Activated B cell treated with CpG ODN at 0.5 μM for 24 hours (primary cell): ENCODE measurements at regions of chr3 and their contacts with region 1.

Region 1: GRCh38 chr3:66500576-66501482 is at the start of gene LRIG1:
- DNase-seq: peak; percentile 91
- ATAC-seq: peak; percentile 96
- H3K4me3 Mint-ChIP-seq: peak within 1 kb of the TSS; percentile 83
- H3K27ac Mint-ChIP-seq: peak within 1 kb of the TSS; percentile 50
- H3K4me1 Mint-ChIP-seq: peaks cover 23% of the 10 kb centered on the region
- H3K27me3 Mint-ChIP-seq: peaks cover 37% of the 10 kb centered on the region
- CTCF ChIP-seq: no peak
- total RNA-seq, gene LRIG1: 9.4 and 9.7 TPM in 2 replicates

Region 2: DNA sequence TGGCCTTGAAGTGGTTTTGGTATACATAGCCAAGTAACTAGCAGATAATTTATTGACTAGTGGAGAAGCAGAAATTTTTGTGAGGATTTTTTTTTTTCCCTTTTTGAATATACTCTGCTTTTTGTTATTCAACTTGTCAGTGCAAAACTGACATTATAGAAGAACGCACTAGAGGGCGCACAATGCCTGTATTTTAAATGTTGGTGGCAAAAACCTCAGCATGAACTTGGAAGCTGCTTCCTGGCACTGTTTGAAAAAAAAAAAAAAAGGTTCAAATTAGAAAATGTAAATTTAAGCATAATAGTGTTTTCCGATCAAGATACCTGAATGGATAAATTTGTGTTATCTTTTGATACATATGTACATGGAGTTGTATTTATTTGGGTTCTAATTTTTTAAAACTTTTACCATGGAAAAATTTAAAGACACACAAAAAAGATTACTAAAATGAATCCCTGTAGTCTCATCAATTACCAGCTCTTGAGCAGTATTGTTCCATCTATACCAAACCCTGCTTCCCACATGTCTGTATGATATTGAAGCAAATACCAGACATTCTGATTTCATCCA is 224.0 kb before region 1 on chr3:
- CTCF ChIA-PET with region 1: no interaction called
- POLR2A ChIA-PET with region 1: no interaction called
- intact Hi-C with region 1: loop called (anchors 1 kb)
- DNase-seq: no peak
- ATAC-seq: peak; percentile 34
- H3K4me3 Mint-ChIP-seq: no peak overlapping the region
- H3K27ac Mint-ChIP-seq: no peak overlapping the region
- H3K4me1 Mint-ChIP-seq: no peaks in the 10 kb centered on the region
- H3K27me3 Mint-ChIP-seq: no peaks in the 10 kb centered on the region
- CTCF ChIP-seq: peak; percentile 76

Region 3: DNA sequence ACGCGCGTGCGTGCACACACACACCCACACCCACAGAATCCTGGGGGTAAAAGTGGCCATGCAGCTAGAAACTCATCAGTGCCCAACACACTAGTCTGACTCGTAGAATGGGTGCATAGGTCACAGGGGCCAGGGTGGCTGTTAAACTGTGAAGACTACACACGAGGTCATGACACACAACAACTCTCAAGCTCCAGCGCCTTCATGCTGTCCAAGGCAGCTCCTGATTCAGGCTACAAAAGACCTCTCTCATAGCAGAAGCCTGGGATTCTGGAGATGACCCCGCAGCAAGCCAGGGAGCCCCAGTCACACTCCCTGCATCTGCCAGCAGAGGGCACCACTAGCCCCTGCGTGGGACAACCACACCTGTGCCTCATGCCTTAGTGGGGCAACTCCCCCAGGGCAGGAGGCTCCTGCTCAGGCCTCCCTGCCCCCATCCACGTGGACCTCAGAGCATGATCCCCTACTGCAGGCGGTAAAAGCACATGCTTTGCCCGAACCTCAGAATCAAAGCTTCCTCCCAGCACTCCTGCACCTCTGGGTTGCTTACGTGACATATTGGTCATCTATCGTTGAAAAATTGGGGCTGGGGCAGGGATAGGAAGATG is 93.1 kb before region 1 on chr3:
- CTCF ChIA-PET with region 1: interaction called, 3 read pairs
- POLR2A ChIA-PET with region 1: interaction called, 3 read pairs
- intact Hi-C with region 1: loop called (anchors 1 kb)
- DNase-seq: peak; percentile 66
- ATAC-seq: peak; percentile 93
- H3K4me3 Mint-ChIP-seq: no peak overlapping the region
- H3K27ac Mint-ChIP-seq: no peak overlapping the region
- H3K4me1 Mint-ChIP-seq: peaks cover 5% of the 10 kb centered on the region
- H3K27me3 Mint-ChIP-seq: no peaks in the 10 kb centered on the region
- CTCF ChIP-seq: peak; percentile 24

Region 4: DNA sequence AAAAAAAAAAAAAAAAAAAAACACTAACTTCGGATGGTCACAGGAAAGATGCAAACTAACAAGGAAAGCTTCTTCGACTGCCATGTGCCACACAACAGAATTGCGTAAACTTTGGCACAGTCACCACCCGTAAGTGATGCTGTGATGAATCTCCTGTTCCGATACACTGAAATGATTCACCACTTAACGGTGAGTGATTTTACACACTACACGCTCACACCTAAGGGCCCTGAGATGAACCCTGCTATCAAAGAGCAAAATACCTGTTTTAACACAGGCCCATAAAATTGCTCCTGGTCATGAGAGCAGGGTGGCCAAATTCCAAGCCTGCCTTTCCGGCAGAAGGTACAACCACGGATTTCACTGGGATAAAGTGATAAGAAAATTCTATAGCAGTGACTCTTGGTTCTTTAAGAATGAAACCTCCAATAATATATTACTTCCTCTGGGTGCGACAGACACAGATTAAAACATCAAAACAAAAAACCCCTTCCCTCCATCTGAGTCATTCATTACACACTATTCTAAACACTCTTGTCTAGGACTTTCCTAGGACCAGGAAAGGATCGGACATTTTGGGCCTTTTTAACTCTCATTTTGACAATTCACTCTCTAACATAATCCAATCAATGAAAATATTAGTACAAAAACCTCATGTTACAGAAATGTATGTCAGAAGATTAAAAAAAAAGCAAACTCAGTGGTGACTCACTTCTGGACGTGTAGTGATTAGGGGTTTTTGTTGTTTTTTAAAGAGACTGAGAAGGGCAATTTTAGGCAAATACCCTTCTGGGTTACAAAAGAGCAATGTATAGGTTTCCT is 28.3 kb before region 1 on chr3:
- CTCF ChIA-PET with region 1: interaction called, 4 read pairs
- POLR2A ChIA-PET with region 1: interaction called, 12 read pairs
- intact Hi-C with region 1: loop called (anchors 1 kb)
- DNase-seq: peak; percentile 32
- ATAC-seq: peak; percentile 87
- H3K4me3 Mint-ChIP-seq: peak overlapping the region; percentile 71
- H3K27ac Mint-ChIP-seq: peak overlapping the region; percentile 95
- H3K4me1 Mint-ChIP-seq: peaks cover 58% of the 10 kb centered on the region
- H3K27me3 Mint-ChIP-seq: peaks cover 10% of the 10 kb centered on the region
- CTCF ChIP-seq: no peak

Region 5: GRCh38 chr3:66582721-66583423 is 82.0 kb after region 1 on chr3:
- CTCF ChIA-PET with region 1: no interaction called
- POLR2A ChIA-PET with region 1: no interaction called
- intact Hi-C with region 1: loop called (anchors 1 kb)
- DNase-seq: peak; percentile 22
- ATAC-seq: peak; percentile 91
- H3K4me3 Mint-ChIP-seq: no peak overlapping the region
- H3K27ac Mint-ChIP-seq: no peak overlapping the region
- H3K4me1 Mint-ChIP-seq: peaks cover 15% of the 10 kb centered on the region
- H3K27me3 Mint-ChIP-seq: peaks cover 62% of the 10 kb centered on the region
- CTCF ChIP-seq: no peak

Region 6: GRCh38 chr3:66998113-66998903 is 497.5 kb after region 1 on chr3 and contains the start of gene KBTBD8:
- CTCF ChIA-PET with region 1: no interaction called
- POLR2A ChIA-PET with region 1: no interaction called
- intact Hi-C with region 1: loop called (anchors 2 kb)
- DNase-seq: peak; percentile 88
- ATAC-seq: peak; percentile 88
- H3K4me3 Mint-ChIP-seq: peak within 1 kb of the TSS; percentile 88
- H3K27ac Mint-ChIP-seq: peak within 1 kb of the TSS; percentile 93
- H3K4me1 Mint-ChIP-seq: peaks cover 47% of the 10 kb centered on the region
- H3K27me3 Mint-ChIP-seq: peaks cover 3% of the 10 kb centered on the region
- CTCF ChIP-seq: no peak
- total RNA-seq, gene KBTBD8: 45.4 and 53.3 TPM in 2 replicates